ENCODE measurements at regions of chr10 and their contacts with region 1.

Region 1: DNA sequence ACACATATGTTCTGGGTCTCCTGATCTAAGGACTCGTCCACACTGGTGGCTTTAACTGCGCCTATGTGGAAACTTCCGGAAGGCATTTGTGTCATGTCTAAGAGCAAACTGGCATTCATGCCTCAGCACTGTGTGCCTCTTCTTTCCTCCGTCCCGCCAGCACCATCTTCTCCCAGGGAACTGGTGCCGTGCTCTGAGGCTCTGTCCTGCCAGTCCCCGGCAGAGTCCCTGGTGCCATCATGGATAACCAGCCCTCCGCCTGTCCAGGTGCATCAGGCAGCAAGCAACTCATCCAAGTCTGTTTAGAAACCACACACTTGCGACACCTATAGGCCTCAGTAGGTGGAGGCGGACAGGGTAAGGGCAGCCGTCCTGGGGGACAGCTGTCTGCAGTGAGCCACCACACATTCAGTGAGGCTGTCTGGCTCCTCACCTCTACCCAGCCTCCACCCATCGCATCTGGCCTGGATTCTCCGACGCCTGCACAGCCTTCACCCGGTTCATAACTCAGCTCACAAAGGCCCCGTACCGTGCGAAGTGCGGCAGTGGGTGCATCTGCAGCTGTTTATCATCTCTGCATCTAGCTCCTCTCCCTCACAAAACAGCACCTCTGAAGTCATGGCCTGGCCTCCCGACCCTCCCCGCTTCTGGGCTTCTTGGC is 162.7 kb downstream of the DIP2C start:
- DNase-seq: no peak
- ATAC-seq: no peak
- H3K4me3 Mint-ChIP-seq: no peak overlapping the region
- H3K27ac Mint-ChIP-seq: no peak overlapping the region
- H3K4me1 Mint-ChIP-seq: no peaks in the 10 kb centered on the region
- H3K27me3 Mint-ChIP-seq: peaks cover 8% of the 10 kb centered on the region

Region 2: GRCh38 chr10:576130-576465 is 49.3 kb after region 1 on chr10:
- CTCF ChIA-PET with region 1: interaction called, 3 read pairs
- POLR2A ChIA-PET with region 1: no interaction called
- intact Hi-C with region 1: loop called in 1 of 2 experiments (anchors 5 kb)
- DNase-seq: no peak
- ATAC-seq: no peak
- H3K4me3 Mint-ChIP-seq: no peak overlapping the region
- H3K27ac Mint-ChIP-seq: no peak overlapping the region
- H3K4me1 Mint-ChIP-seq: no peaks in the 10 kb centered on the region
- H3K27me3 Mint-ChIP-seq: peaks cover 9% of the 10 kb centered on the region

Region 3: GRCh38 chr10:740936-741431 is 214.2 kb after region 1 on chr10:
- CTCF ChIA-PET with region 1: no interaction called
- POLR2A ChIA-PET with region 1: no interaction called
- intact Hi-C with region 1: no loop called
- DNase-seq: no peak
- ATAC-seq: no peak
- H3K4me3 Mint-ChIP-seq: no peak overlapping the region
- H3K27ac Mint-ChIP-seq: no peak overlapping the region
- H3K4me1 Mint-ChIP-seq: no peaks in the 10 kb centered on the region
- H3K27me3 Mint-ChIP-seq: peaks cover 6% of the 10 kb centered on the region

Measured in activated CD4-positive, alpha-beta T cell treated with anti-CD3 and anti-CD28 coated beads for 36 hours (primary cell).